ENCODE measurements at regions of chr1 and their contacts with region 1.

Region 1: GRCh38 chr1:109548321-109549267 is at the start of gene GNAI3:
- DNase-seq: peak; percentile 97 to 98 (median 98)
- ATAC-seq: peak; percentile 97 to 98
- H3K4me3 ChIP-seq: peak within 1 kb of the TSS; percentile 75
- H3K27ac ChIP-seq: peak within 1 kb of the TSS; percentile 98
- H3K4me1 ChIP-seq: peaks cover 3% of the 10 kb centered on the region
- H3K27me3 ChIP-seq: no peaks in the 10 kb centered on the region
- total RNA-seq, gene GNAI3: 2.6 to 4.7 (median 3.0) TPM

Region 2: GRCh38 chr1:109493805-109494539 is 54.6 kb before region 1 on chr1 and contains the start of gene CYB561D1:
- intact Hi-C with region 1: no loop called
- DNase-seq: peak; percentile 90 to 96 (median 95)
- ATAC-seq: peak; percentile 93
- H3K4me3 ChIP-seq: peak within 1 kb of the TSS; percentile 52
- H3K27ac ChIP-seq: peak within 1 kb of the TSS; percentile 21
- H3K4me1 ChIP-seq: peaks cover 4% of the 10 kb centered on the region
- H3K27me3 ChIP-seq: no peaks in the 10 kb centered on the region
- total RNA-seq, gene CYB561D1: 4.9 to 6.6 (median 5.5) TPM

Region 3: DNA sequence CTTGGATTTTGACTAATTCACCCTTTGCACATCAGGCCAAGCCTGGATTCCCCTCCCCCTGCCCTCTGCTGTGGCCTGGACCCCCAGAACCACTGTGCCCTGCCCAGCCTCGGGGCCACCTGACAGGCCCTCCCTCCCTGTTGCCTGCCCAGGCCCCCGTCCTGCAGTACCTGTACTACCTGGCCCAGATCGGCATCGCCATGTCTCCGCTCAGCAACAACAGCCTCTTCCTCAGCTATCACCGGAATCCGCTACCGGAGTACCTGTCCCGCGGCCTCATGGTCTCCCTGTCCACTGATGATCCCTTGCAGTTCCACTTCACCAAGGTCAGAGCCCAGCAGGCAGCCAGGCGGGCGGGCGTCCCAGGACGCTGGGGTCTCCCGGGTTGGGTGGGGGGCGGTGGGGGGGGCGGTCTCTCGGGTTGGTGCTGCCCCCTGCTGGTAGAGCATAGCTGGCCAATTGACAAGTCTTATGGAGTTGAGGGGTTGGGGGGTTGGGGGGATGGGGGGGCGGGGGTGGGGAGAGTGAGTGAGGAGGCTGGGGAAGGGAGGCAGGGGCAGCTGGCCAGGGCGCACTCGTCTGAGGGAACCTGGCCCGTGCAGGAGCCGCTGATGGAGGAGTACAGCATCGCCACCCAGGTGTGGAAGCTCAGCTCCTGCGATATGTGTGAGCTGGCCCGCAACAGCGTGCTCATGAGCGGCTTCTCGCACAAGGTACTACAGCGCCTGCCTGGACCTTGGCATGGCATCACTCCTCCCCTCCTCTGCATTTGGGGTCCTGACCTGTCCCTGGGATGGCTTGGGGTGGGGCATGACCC is 81.7 kb after region 1 on chr1:
- intact Hi-C with region 1: loop called in 3 of 4 experiments (anchors 2 to 5 kb)
- DNase-seq: peak in 2 of 3 donors; percentile 58 to 62
- ATAC-seq: no peak
- H3K4me3 ChIP-seq: no peak overlapping the region
- H3K27ac ChIP-seq: no peak overlapping the region
- H3K4me1 ChIP-seq: no peaks in the 10 kb centered on the region
- H3K27me3 ChIP-seq: no peaks in the 10 kb centered on the region

Region 4: GRCh38 chr1:109643385-109644230 is 95.0 kb after region 1 on chr1:
- intact Hi-C with region 1: loop called in 1 of 4 experiments (anchors 5 kb)
- DNase-seq: peak; percentile 81 to 93 (median 93)
- ATAC-seq: peak; percentile 82 to 88
- H3K4me3 ChIP-seq: no peak overlapping the region
- H3K27ac ChIP-seq: no peak overlapping the region
- H3K4me1 ChIP-seq: no peaks in the 10 kb centered on the region
- H3K27me3 ChIP-seq: no peaks in the 10 kb centered on the region

Region 5: DNA sequence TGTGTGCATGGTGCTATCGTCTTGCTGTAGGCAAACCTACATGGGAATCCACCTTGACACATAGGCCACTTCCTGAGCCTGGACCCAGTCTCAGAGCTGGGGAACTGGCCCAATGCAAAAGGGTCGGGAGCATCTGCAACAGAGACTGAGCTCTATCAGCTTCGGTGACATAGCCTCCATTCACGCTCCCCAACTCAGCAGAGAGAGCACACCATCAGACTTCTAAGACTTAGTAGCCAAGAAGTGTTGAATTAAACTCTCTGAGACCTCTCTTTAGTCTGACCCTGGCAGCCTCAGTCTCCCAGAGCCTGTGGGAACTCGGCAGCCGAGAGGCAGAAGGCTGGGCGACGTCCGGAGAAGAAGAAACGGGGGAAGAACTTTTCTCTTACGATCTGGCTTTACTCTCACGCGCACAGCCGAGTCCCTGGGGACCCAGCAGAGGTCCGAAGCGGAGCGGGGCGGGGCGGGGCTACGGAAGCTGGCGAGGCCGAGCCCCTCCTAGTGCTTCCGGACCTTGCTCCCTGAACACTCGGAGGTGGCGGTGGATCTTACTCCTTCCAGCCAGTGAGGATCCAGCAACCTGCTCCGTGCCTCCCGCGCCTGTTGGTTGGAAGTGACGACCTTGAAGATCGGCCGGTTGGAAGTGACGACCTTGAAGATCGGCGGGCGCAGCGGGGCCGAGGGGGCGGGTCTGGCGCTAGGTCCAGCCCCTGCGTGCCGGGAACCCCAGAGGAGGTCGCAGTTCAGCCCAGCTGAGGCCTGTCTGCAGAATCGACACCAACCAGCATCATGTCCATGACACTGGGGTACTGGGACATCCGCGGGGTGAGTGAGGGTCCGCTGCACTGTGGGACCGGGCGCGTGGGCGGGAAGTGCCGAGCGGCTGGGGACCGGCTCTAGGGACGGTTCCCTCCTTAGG is 107.3 kb after region 1 on chr1 and contains the start of gene GSTM4:
- intact Hi-C with region 1: no loop called
- DNase-seq: peak; percentile 91 to 97 (median 96)
- ATAC-seq: peak; percentile 95 to 96
- H3K4me3 ChIP-seq: peak within 1 kb of the TSS; percentile 51
- H3K27ac ChIP-seq: peak within 1 kb of the TSS; percentile 85
- H3K4me1 ChIP-seq: peaks cover 2% of the 10 kb centered on the region
- H3K27me3 ChIP-seq: no peaks in the 10 kb centered on the region
- total RNA-seq, gene GSTM4: 31.2 to 57.8 (median 39.4) TPM

Region 6: GRCh38 chr1:109773146-109773899 is 224.7 kb after region 1 on chr1:
- intact Hi-C with region 1: loop called (anchors 2 to 10 kb)
- DNase-seq: peak; percentile 85 to 92 (median 92)
- ATAC-seq: peak; percentile 86 to 87
- H3K4me3 ChIP-seq: no peak overlapping the region
- H3K27ac ChIP-seq: no peak overlapping the region
- H3K4me1 ChIP-seq: no peaks in the 10 kb centered on the region
- H3K27me3 ChIP-seq: no peaks in the 10 kb centered on the region

Measured in right cardiac atrium (tissue), 5 donors.